ENCODE measurements at regions of chr6 and their contacts with region 1.

Region 1: GRCh38 chr6:56595490-56596122 is 47.1 kb downstream of the DST start:
- DNase-seq: peak; percentile 30
- ATAC-seq: peak; percentile 60
- H3K4me3 ChIP-seq: no peak overlapping the region
- H3K27ac ChIP-seq: no peak overlapping the region
- H3K4me1 ChIP-seq: peaks cover 2% of the 10 kb centered on the region
- H3K27me3 ChIP-seq: no peaks in the 10 kb centered on the region
- CTCF ChIP-seq: peak; percentile 50
- POLR2A ChIP-seq: no peak
- RAD21 ChIP-seq: peak; percentile 16; the same call in 1 of the 2 replicates

Region 2: GRCh38 chr6:56314683-56315523 is 280.7 kb before region 1 on chr6:
- CTCF ChIA-PET with region 1: interaction called, 3 read pairs
- POLR2A ChIA-PET with region 1: no interaction called
- dilution Hi-C with region 1: no loop called
- in situ Hi-C with region 1: no loop called
- intact Hi-C with region 1: loop called (anchors 2 kb)
- DNase-seq: peak; percentile 50
- ATAC-seq: peak; percentile 77
- H3K4me3 ChIP-seq: no peak overlapping the region
- H3K27ac ChIP-seq: no peak overlapping the region
- H3K4me1 ChIP-seq: peaks cover 2% of the 10 kb centered on the region; the same call in 1 of the 2 replicates
- H3K27me3 ChIP-seq: no peaks in the 10 kb centered on the region; the same call in 1 of the 2 replicates
- CTCF ChIP-seq: peak; percentile 77
- POLR2A ChIP-seq: no peak
- RAD21 ChIP-seq: peak; percentile 87

Region 3: DNA sequence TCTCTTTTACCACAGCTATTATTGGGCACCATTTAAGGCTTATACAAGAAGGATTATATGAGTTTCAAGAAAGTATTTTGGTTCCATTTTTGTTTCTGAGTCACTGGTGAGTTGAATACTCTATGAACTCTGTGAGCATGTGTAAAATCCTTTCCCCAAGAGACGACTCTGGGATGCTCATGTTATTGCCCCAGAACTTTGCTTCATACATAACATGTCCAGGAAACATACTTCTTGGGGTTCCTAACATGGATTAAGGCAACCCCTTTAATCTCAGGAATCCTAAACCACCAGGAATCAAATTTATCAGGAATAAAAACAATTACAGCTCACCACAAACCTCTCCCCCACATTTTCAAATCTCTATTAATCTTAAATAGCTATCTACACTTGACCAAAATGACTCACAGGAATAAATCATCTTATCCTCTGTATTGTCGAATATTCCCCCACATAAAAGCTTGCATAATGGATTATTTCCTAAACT is 230.7 kb before region 1 on chr6:
- CTCF ChIA-PET with region 1: interaction called, 3 read pairs
- POLR2A ChIA-PET with region 1: no interaction called
- dilution Hi-C with region 1: loop called (anchors 25 kb)
- in situ Hi-C with region 1: loop called (anchors 5 kb)
- intact Hi-C with region 1: no loop called
- DNase-seq: peak; percentile 78
- ATAC-seq: peak; percentile 96
- H3K4me3 ChIP-seq: no peak overlapping the region
- H3K27ac ChIP-seq: no peak overlapping the region
- H3K4me1 ChIP-seq: 0 out of 2 replicates have a peak, but pooled peaks cover 2% of the 10 kb centered on the region
- H3K27me3 ChIP-seq: no peaks in the 10 kb centered on the region
- CTCF ChIP-seq: no peak
- POLR2A ChIP-seq: no peak
- RAD21 ChIP-seq: no peak

Measured in IMR-90 (cell line).